Right lobe of liver (tissue), 6 donors: ENCODE measurements at regions of chr7 and their contacts with region 1.

Region 1: GRCh38 chr7:54788664-54789063 is 29.7 kb upstream of the SEC61G start:
- DNase-seq: peak in 1 of 3 donors; percentile 29
- ATAC-seq: peak; percentile 87 to 98 (median 88)
- H3K4me3 ChIP-seq: no peak overlapping the region
- H3K27ac ChIP-seq: no peak overlapping the region
- H3K4me1 ChIP-seq: no peaks in the 10 kb centered on the region
- H3K27me3 ChIP-seq: no peaks in the 10 kb centered on the region
- CTCF ChIP-seq: peak; percentile 59 to 67 (median 62)
- POLR2A ChIP-seq: no peak

Region 2: GRCh38 chr7:54839538-54840213 is 51.0 kb after region 1 on chr7:
- intact Hi-C with region 1: loop called in 1 of 2 experiments (anchors 10 kb)
- DNase-seq: peak; percentile 84 to 86 (median 85)
- ATAC-seq: peak; percentile 92 to 97 (median 94)
- H3K4me3 ChIP-seq: no peak overlapping the region
- H3K27ac ChIP-seq: no peak overlapping the region
- H3K4me1 ChIP-seq: peaks cover 0 to 15% (median 1%) of the 10 kb centered on the region in 4 donors
- H3K27me3 ChIP-seq: no peaks in the 10 kb centered on the region
- CTCF ChIP-seq: peak; percentile 77 to 89 (median 80)
- POLR2A ChIP-seq: no peak

Region 3: DNA sequence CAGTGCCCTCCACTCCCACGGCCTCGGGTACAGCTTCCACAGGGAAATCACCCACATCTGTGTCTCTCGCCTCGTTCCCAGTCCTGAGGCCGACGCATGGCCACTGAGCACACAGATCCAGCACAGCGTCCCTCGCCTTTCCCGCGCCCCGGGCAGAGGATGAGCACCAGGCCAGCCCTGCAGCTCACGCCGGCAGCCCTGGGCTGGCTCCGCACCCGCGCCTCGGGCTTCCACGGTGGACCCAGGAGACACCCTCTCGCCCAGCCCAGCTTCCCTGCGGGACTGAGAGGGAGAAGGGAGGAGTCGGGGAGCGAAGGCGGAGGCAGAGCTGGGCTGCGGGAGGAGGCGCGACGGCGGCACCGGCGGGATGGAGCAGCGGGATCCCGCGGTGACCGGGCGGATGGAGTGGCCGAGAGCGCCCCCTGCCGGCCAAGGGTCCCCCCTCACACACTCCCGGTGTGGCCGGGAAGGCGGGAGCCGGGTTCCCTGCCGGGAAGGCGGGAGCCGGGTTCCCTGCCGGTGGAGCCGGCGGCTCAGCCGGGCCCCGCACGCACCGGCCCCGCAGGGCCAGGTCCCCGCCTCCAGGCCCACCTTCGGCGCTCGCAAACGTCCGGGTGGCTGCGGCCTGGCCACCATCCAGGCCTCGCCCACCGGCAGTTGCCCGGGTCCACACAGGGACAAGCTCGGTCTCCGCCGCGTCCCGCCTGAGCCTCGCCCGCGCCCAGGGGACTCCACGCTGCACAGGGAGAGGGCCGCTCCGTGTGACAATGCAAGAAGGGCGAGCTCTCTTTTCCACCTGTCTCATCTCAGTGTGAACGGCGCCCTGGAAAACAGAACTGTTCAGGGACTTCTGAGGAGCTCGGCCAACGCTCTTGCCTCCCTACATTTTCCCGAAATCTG is 466.2 kb after region 1 on chr7:
- intact Hi-C with region 1: loop called in 1 of 2 experiments (anchors 5 kb)
- DNase-seq: peak; percentile 88 to 90 (median 88)
- ATAC-seq: peak; percentile 89 to 95 (median 92)
- H3K4me3 ChIP-seq: peak overlapping the region; percentile 68 to 71 (median 68)
- H3K27ac ChIP-seq: peak overlapping the region in 2 of 3 donors; percentile 0 to 44
- H3K4me1 ChIP-seq: peaks cover 0 to 10% (median 3%) of the 10 kb centered on the region in 4 donors
- H3K27me3 ChIP-seq: no peaks in the 10 kb centered on the region
- CTCF ChIP-seq: peak; percentile 91 to 96 (median 94)
- POLR2A ChIP-seq: no peak